ENCODE measurements at regions of chr1 and their contacts with region 1.

Region 1: DNA sequence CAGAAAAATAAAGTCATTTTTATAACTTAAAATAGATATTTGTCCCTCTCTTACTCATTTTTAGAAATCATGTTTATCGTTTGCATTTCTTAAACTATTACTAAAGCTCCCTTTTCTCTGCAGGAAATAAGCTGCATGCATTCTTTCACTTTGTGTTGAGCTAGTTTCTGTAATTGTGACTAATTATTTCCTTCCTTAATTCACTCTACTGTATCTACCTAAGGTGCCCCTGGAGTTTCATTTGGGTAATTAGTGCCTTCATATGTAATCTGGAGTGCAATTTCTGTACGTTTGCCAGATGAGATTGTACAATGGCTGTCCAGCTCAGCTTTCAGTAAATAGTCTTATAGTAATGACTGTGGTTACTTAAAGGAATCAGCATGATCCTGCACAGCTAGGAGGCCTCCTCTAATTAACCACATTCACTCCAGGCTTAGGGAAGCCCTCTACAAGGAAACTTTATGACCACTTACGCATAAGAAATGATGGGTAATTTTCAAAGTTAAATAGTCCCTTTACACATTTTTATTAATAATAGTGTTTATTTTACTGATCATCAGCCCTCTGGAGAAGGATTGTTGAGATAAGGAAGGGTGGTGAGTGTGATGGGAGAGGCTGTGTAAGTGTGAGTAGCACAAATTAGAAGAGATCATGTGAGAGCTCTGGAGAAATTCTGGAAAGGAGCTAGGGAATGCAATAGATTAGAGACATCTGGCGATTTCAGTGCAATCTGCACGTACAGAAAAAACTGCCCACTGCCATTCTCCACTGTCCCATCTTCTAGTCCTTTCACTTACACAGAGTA is 86.8 kb downstream of the LRRC8C start:
- DNase-seq: no peak
- H3K4me3 Mint-ChIP-seq: peak overlapping the region; percentile 76
- H3K27ac Mint-ChIP-seq: peak overlapping the region; percentile 100
- H3K4me1 Mint-ChIP-seq: peaks cover 88% of the 10 kb centered on the region
- H3K27me3 Mint-ChIP-seq: no peaks in the 10 kb centered on the region

Region 2: GRCh38 chr1:89524369-89525168 is 195.1 kb before region 1 on chr1 and contains the start of gene LRRC8B:
- intact Hi-C with region 1: loop called (anchors 1 kb)
- DNase-seq: peak; percentile 89
- H3K4me3 Mint-ChIP-seq: no peak within 1 kb of the TSS
- H3K27ac Mint-ChIP-seq: no peak within 1 kb of the TSS
- H3K4me1 Mint-ChIP-seq: peaks cover 36% of the 10 kb centered on the region
- H3K27me3 Mint-ChIP-seq: no peaks in the 10 kb centered on the region
- total RNA-seq, gene LRRC8B: 62.3 and 69.9 TPM in 2 replicates

Region 3: DNA sequence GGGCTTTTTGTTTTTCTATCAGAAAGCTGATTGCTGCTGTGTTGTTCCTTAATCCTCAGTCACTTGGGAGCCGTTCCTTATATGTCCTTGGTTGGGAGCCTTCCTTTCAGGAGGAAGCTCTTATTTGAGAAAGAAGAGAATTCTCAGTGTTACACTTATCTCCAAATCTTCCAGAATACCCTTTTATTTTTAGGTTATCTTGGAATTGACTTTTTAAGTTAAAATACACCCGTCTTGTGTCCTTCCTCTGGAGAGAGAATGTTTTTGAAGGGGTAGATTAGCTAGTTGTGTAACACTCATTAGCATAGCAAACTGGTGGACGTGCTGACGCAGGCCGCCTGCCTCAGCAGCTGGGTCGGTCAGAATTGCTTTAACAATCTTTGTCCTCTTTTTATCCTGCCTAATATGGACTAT is 152.9 kb before region 1 on chr1:
- intact Hi-C with region 1: no loop called
- DNase-seq: no peak
- H3K4me3 Mint-ChIP-seq: no peak overlapping the region
- H3K27ac Mint-ChIP-seq: no peak overlapping the region
- H3K4me1 Mint-ChIP-seq: peaks cover 20% of the 10 kb centered on the region
- H3K27me3 Mint-ChIP-seq: no peaks in the 10 kb centered on the region

Region 4: DNA sequence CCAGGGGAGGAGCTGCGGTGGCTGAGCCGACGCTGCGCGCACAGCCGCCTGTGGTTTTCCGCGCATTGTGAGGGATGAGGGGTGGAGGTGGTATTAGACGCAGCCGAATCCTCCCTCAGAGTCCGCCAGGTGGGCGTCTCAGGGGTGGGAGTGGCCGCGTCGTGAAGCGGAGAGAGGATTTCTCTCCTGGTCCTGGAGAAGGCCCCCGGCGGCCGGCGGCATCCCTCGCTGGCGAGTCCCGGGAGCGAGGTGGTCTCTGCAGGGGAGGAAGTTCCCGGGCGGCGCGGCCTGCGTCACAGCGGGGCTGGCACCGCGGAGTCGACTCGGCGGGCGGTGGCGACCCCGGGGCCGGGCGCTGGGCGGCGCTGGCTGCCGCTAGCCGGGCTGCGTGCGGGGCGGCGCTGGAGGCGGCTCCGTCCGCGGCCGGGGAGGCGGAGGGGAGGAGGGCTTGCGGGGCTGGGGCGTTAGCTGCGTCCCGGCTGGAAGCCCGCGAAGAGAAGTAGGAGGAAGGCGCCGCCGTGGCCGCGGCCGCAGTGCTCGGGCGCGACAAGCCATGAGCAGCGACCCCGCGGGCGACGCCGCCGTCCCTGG is 87.0 kb before region 1 on chr1 and contains the start of gene LRRC8C:
- intact Hi-C with region 1: loop called (anchors 1 kb)
- DNase-seq: peak; percentile 84
- H3K4me3 Mint-ChIP-seq: peak within 1 kb of the TSS; percentile 92
- H3K27ac Mint-ChIP-seq: peak within 1 kb of the TSS; percentile 96
- H3K4me1 Mint-ChIP-seq: peaks cover 77% of the 10 kb centered on the region
- H3K27me3 Mint-ChIP-seq: no peaks in the 10 kb centered on the region
- total RNA-seq, gene LRRC8C: 64.3 and 66.1 TPM in 2 replicates

Region 5: DNA sequence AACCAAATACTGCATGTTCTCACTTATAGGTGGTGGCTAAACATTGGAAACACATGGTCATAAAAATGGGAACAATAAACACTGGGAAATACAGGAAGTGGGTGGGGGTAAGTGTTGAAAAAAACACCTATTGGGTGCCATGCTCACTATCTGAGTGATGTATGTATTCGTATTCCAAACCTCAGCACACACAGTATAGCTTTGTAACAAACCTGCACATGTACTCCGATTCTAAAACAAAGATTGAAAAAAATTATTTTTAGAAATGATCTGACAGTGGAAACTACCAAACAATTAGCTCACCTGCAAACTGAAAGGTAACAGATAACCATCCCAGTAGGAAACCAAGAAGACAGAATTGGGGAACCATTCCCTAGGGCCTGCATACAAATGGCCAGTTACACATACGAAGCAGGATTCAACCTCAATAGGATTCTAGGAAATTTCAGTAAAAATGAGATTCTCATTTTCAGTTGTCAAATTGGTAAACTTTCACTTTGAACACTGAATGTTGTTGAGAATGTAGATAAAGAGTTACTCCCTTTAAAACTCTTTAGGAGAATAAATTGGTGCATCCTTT is 13.0 kb after region 1 on chr1:
- intact Hi-C with region 1: loop called (anchors 1 kb)
- DNase-seq: no peak
- H3K4me3 Mint-ChIP-seq: peak overlapping the region; percentile 47
- H3K27ac Mint-ChIP-seq: peak overlapping the region; percentile 86
- H3K4me1 Mint-ChIP-seq: peaks cover 73% of the 10 kb centered on the region
- H3K27me3 Mint-ChIP-seq: no peaks in the 10 kb centered on the region

Region 6: GRCh38 chr1:89762779-89763648 is 43.3 kb after region 1 on chr1:
- intact Hi-C with region 1: loop called (anchors 1 kb)
- DNase-seq: peak; percentile 78
- H3K4me3 Mint-ChIP-seq: peak overlapping the region; percentile 92
- H3K27ac Mint-ChIP-seq: peak overlapping the region; percentile 93
- H3K4me1 Mint-ChIP-seq: peaks cover 63% of the 10 kb centered on the region
- H3K27me3 Mint-ChIP-seq: no peaks in the 10 kb centered on the region

Region 7: GRCh38 chr1:89994805-89995597 is 275.3 kb after region 1 on chr1 and contains the start of gene ZNF326:
- intact Hi-C with region 1: loop called (anchors 5 kb)
- DNase-seq: peak; percentile 93
- H3K4me3 Mint-ChIP-seq: peak within 1 kb of the TSS; percentile 99
- H3K27ac Mint-ChIP-seq: peak within 1 kb of the TSS; percentile 97
- H3K4me1 Mint-ChIP-seq: peaks cover 46% of the 10 kb centered on the region
- H3K27me3 Mint-ChIP-seq: no peaks in the 10 kb centered on the region
- total RNA-seq, gene ZNF326: 37.3 and 39.1 TPM in 2 replicates

Measured in activated T-helper 1 cell treated with anti-CD3 and anti-CD28 coated beads, Interleukin-12 subunit alpha, Interleukin-12 subunit beta, Interleukin-2, Interleukin-4 antibody, amounts not matched to agents 30 ng/mL and 10 ng/mL and 1 ng/mL, durations not matched to agents 14 hours and 24 hours and 36 hours (primary cell).